ENCODE measurements at regions of chr9 and their contacts with region 1.

Region 1: DNA sequence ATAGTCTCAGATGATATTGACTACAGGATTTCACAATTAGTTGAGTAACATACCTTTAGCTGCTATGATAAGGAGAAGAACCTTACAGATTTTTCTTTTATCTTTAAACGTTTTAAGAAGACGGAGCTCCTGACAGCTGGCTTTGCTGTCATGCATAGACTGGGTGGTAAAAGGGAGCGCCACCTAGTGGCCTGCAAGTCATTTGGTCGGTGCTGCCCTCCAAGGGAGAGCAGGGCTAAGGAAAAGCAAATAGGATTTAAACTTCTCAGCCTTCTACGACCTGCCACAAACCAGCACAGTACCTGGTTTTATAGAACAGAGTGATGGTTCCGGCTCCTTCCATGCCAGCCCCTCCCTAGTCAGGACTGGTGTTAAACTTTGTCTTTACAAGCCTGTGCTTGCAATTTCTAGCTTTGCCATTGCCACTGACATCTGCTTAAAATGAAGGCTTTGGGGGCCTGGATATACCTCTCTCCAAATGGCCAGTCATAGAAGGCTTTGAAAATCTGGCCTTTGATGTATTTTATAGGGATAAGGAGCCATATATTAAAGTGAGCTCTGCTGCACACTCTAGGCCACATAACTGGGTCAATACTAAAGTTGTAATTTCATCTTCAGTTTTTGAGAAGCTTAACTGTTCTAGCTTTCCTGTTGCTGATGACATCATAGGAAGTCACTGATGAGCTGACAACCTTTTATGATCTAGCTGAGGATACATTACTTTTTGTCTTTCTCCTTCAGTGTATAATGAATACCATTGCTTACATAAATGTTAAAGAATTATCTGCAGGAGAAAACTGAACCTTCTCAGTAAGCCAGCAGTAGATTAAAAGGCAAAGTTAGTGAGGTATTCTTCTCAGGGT is 31.1 kb upstream of the ADAMTSL1 start:
- DNase-seq: peak; percentile 68 to 81 (median 72)
- ATAC-seq: peak; percentile 74 to 89 (median 81)
- H3K4me3 ChIP-seq: no peak overlapping the region
- H3K27ac ChIP-seq: peak overlapping the region in 1 of 12 donors; percentile 31
- H3K4me1 ChIP-seq: peaks cover 0 to 21% (median 11%) of the 10 kb centered on the region in 12 donors
- H3K27me3 ChIP-seq: no peaks in the 10 kb centered on the region
- CTCF ChIP-seq: peak; percentile 86 to 97 (median 92)
- POLR2A ChIP-seq: no peak

Region 2: DNA sequence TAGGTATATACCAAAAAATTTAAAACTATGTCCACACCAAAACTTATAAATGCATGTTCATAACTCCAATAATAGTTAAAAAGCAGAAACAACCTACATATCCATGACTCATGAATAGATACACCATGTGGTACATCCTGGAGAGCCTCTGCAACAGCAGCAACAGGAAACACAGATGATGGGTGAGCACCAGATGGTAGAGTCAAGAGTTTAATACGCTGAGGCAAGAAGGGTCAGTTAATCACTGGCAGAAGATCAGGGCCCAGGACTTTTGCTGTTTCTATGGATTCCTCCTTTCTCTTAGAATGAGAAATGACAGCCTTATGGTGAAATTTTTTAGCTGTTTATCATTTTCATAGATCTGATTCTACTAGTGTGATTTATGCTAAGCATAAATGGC is 320.7 kb before region 1 on chr9:
- intact Hi-C with region 1: no loop called
- DNase-seq: no peak
- ATAC-seq: no peak
- H3K4me3 ChIP-seq: no peak overlapping the region
- H3K27ac ChIP-seq: no peak overlapping the region
- H3K4me1 ChIP-seq: no peaks in the 10 kb centered on the region
- H3K27me3 ChIP-seq: no peaks in the 10 kb centered on the region
- CTCF ChIP-seq: no peak
- POLR2A ChIP-seq: no peak

Region 3: GRCh38 chr9:18362901-18363685 is 79.8 kb before region 1 on chr9:
- intact Hi-C with region 1: loop called in 2 of 10 experiments (anchors 5 kb)
- DNase-seq: peak; percentile 35 to 44 (median 36)
- ATAC-seq: peak; percentile 92 to 97 (median 96)
- H3K4me3 ChIP-seq: no peak overlapping the region
- H3K27ac ChIP-seq: peak overlapping the region in 9 of 12 donors; percentile 1 to 65 (median 60)
- H3K4me1 ChIP-seq: peaks cover 0 to 30% (median 12%) of the 10 kb centered on the region in 12 donors
- H3K27me3 ChIP-seq: no peaks in the 10 kb centered on the region
- CTCF ChIP-seq: no peak
- POLR2A ChIP-seq: no peak